ENCODE measurements at regions of chr9 and their contacts with region 1.

Region 1: GRCh38 chr9:72443855-72444254 is 77.6 kb upstream of the TMC1 start:
- DNase-seq: peak; percentile 37
- H3K4me3 ChIP-seq: no peak overlapping the region
- H3K27ac ChIP-seq: no peak overlapping the region
- H3K4me1 ChIP-seq: peaks cover 41% of the 10 kb centered on the region
- H3K27me3 ChIP-seq: no peaks in the 10 kb centered on the region
- CTCF ChIP-seq: no peak

Region 2: GRCh38 chr9:72292256-72292682 is 151.6 kb before region 1 on chr9:
- CTCF ChIA-PET with region 1: no interaction called
- dilution Hi-C with region 1: no loop called
- in situ Hi-C with region 1: no loop called
- intact Hi-C with region 1: loop called (anchors 5 kb)
- DNase-seq: peak; percentile 27
- H3K4me3 ChIP-seq: no peak overlapping the region
- H3K27ac ChIP-seq: no peak overlapping the region
- H3K4me1 ChIP-seq: peaks cover 8% of the 10 kb centered on the region
- H3K27me3 ChIP-seq: no peaks in the 10 kb centered on the region
- CTCF ChIP-seq: peak; percentile 45 to 48

Region 3: DNA sequence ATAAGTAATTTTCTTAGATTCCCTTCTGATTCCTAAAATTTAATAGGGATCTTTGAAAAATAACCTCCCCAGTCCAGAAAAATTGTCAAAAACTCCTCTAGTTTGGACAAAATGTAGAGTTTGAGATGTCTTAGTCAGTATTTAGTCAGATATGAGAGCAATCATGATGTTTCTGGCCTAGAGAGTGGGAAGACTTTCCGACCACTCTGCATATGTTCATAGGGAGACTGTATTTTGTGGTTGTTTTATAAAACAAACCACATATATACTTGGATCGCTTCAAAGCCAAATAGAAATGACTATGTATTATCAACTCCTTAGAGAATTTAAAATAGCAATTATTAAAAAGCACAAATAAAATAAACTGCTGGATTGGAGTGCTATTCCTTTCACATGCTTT is 94.6 kb before region 1 on chr9:
- CTCF ChIA-PET with region 1: no interaction called
- dilution Hi-C with region 1: no loop called
- in situ Hi-C with region 1: no loop called
- intact Hi-C with region 1: no loop called
- DNase-seq: no peak
- H3K4me3 ChIP-seq: no peak overlapping the region
- H3K27ac ChIP-seq: no peak overlapping the region
- H3K4me1 ChIP-seq: peaks cover 4% of the 10 kb centered on the region
- H3K27me3 ChIP-seq: no peaks in the 10 kb centered on the region
- CTCF ChIP-seq: no peak

Region 4: GRCh38 chr9:72473474-72474261 is 29.8 kb after region 1 on chr9:
- CTCF ChIA-PET with region 1: no interaction called
- dilution Hi-C with region 1: no loop called
- in situ Hi-C with region 1: no loop called
- intact Hi-C with region 1: loop called (anchors 5 kb)
- DNase-seq: peak; percentile 73
- H3K4me3 ChIP-seq: no peak overlapping the region
- H3K27ac ChIP-seq: no peak overlapping the region
- H3K4me1 ChIP-seq: peaks cover 41% of the 10 kb centered on the region
- H3K27me3 ChIP-seq: no peaks in the 10 kb centered on the region
- CTCF ChIP-seq: no peak

Region 5: GRCh38 chr9:72526901-72527800 is 83.3 kb after region 1 on chr9:
- CTCF ChIA-PET with region 1: no interaction called
- dilution Hi-C with region 1: no loop called
- in situ Hi-C with region 1: no loop called
- intact Hi-C with region 1: loop called (anchors 5 kb)
- DNase-seq: peak; percentile 88
- H3K4me3 ChIP-seq: no peak overlapping the region
- H3K27ac ChIP-seq: peak overlapping the region; percentile 44
- H3K4me1 ChIP-seq: peaks cover 31% of the 10 kb centered on the region
- H3K27me3 ChIP-seq: no peaks in the 10 kb centered on the region
- CTCF ChIP-seq: no peak

Region 6: DNA sequence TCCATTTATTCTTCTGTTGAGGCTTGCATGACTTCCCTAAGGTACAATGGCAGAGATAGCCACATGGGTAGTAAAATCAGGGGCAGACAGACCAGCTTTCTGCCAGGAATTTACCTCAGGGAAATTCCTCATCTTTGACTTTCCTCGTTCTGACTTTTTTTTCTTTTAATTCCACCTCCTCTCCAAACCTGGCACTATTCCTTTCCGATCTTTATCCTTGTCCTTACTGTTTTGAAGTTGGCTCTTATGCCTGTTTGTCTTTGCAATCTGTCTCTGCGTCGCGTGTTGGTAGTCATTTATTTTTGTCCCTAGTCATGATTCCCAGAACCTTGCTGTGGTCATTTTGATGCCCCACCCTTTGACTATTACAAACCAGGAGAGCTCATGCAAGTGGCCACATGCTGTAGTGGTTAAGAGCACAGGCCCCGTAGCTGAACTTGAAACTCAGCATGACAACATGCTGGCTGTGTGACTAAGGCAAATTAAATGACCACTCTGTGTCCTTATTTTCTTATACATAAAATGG is 96.6 kb after region 1 on chr9:
- CTCF ChIA-PET with region 1: no interaction called
- dilution Hi-C with region 1: no loop called
- in situ Hi-C with region 1: no loop called
- intact Hi-C with region 1: loop called (anchors 5 kb)
- DNase-seq: peak; percentile 96
- H3K4me3 ChIP-seq: no peak overlapping the region
- H3K27ac ChIP-seq: peak overlapping the region; percentile 95
- H3K4me1 ChIP-seq: peaks cover 34% of the 10 kb centered on the region
- H3K27me3 ChIP-seq: no peaks in the 10 kb centered on the region
- CTCF ChIP-seq: no peak

Measured in mammary epithelial cell (primary cell).